Activated T-helper 1 cell treated with anti-CD3 and anti-CD28 coated beads, Interleukin-12 subunit alpha, Interleukin-12 subunit beta, Interleukin-2, Interleukin-4 antibody, amounts not matched to agents 30 ng/mL and 10 ng/mL and 1 ng/mL, durations not matched to agents 14 hours and 24 hours and 36 hours (primary cell): ENCODE measurements at regions of chr14 and their contacts with region 1.

Region 1: DNA sequence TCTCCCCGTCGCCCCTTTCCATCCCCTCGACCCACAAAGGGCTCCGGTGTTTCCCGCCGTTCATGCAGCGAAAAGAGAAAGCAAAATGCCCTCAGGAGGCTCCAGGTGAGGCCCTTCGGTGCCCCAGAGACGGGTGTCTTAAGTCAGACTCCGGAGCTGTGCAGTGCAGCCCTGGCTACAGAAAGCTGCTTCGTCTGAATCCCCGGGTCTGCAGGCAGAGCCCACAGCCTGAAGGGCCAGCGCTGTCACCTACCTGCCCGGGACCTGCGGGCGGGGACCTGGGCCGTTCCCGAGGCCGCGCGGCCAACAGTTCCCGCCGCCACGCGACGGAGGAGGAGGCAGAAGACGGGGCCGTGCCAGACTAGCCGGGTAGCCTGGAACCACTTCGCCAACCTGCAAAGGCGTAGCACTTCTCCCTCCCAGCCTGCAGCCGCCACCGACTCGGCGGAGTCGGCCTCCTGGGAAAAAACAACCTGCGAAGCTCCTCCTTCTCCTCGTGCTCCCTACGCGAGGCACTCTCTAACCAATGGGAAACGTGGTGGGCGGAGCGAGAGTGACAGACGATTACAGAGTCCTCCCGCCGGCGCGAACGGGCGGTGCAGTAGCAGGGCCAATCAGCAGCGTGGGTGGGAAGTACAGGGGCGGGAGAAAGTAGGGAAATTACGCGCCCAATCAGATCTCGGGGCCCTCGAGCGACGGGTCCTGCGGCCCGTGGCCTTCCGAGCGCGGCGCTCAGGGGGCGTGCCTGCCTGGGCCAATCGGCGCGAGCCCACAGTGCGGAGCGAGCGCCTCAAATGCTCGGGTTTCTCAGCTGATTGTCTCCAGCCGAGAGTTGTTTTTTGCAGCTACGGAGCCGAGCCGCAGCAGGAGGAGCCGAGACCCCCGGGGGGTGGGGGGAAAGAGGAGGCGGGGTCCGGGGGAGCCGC is at the starts of genes GPR137C and TXNDC16:
- DNase-seq: peak; percentile 99
- H3K4me3 Mint-ChIP-seq: peak within 1 kb of the TSS; percentile 92
- H3K27ac Mint-ChIP-seq: peak within 1 kb of the TSS; percentile 91
- H3K4me1 Mint-ChIP-seq: peaks cover 40% of the 10 kb centered on the region
- H3K27me3 Mint-ChIP-seq: peaks cover 25% of the 10 kb centered on the region
- total RNA-seq, gene GPR137C: 0.10 and 0.34 TPM in 2 replicates
- total RNA-seq, gene TXNDC16: 4.0 and 4.8 TPM in 2 replicates

Region 2: GRCh38 chr14:51651388-51652167 is 900.7 kb before region 1 on chr14 and contains the start of gene FRMD6:
- intact Hi-C with region 1: loop called (anchors 2 kb)
- DNase-seq: peak; percentile 74
- H3K4me3 Mint-ChIP-seq: peak within 1 kb of the TSS; percentile 81
- H3K27ac Mint-ChIP-seq: peak within 1 kb of the TSS; percentile 74
- H3K4me1 Mint-ChIP-seq: peaks cover 18% of the 10 kb centered on the region
- H3K27me3 Mint-ChIP-seq: peaks cover 7% of the 10 kb centered on the region
- total RNA-seq, gene FRMD6: 5.9 and 6.1 TPM in 2 replicates

Region 3: GRCh38 chr14:51996148-51996746 is 556.1 kb before region 1 on chr14:
- intact Hi-C with region 1: loop called (anchors 2 kb)
- DNase-seq: no peak
- H3K4me3 Mint-ChIP-seq: no peak overlapping the region
- H3K27ac Mint-ChIP-seq: no peak overlapping the region
- H3K4me1 Mint-ChIP-seq: peaks cover 35% of the 10 kb centered on the region
- H3K27me3 Mint-ChIP-seq: no peaks in the 10 kb centered on the region

Region 4: GRCh38 chr14:52272375-52272774 is 280.0 kb before region 1 on chr14:
- intact Hi-C with region 1: no loop called
- DNase-seq: no peak
- H3K4me3 Mint-ChIP-seq: no peak overlapping the region
- H3K27ac Mint-ChIP-seq: no peak overlapping the region
- H3K4me1 Mint-ChIP-seq: peaks cover 21% of the 10 kb centered on the region
- H3K27me3 Mint-ChIP-seq: peaks cover 57% of the 10 kb centered on the region

Region 5: DNA sequence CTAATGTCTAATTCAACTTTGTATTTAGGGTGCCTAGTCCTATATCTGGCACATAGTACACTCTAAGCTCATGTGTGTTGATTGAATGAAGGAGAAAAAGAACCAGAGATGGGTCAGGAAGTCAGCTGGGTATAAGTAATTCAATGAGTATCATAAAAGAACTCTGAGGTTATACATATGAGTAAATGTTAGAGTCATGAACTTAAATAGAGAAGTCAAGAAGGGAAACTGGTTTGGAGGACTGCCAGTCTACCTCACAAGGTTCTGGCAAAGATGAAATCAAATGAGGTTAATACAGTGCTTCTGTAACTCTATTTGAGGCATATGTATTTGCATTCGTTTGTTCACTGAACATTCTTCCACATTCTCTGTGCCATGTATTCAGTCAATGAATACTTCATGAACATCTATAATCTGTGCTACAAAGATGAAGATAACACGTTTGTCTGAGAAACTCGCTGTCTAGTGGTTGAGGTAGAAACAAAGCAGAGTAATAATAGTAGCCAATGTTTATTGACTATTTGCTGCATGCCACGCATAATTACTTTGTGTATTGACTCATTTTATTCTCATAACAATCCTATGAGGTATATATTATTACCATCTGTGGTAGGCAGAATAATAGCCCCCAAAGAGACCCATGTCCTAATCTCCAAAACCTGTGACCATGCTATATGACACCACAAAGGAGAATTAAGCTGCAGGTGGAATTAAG is 149.4 kb before region 1 on chr14:
- intact Hi-C with region 1: loop called (anchors 5 kb)
- DNase-seq: no peak
- H3K4me3 Mint-ChIP-seq: no peak overlapping the region
- H3K27ac Mint-ChIP-seq: peak overlapping the region; percentile 54
- H3K4me1 Mint-ChIP-seq: peaks cover 73% of the 10 kb centered on the region
- H3K27me3 Mint-ChIP-seq: no peaks in the 10 kb centered on the region

Region 6: GRCh38 chr14:52640137-52640536 is 87.8 kb after region 1 on chr14:
- intact Hi-C with region 1: loop called (anchors 5 kb)
- DNase-seq: no peak
- H3K4me3 Mint-ChIP-seq: no peak overlapping the region
- H3K27ac Mint-ChIP-seq: peak overlapping the region; percentile 41
- H3K4me1 Mint-ChIP-seq: peaks cover 14% of the 10 kb centered on the region
- H3K27me3 Mint-ChIP-seq: peaks cover 6% of the 10 kb centered on the region

Region 7: DNA sequence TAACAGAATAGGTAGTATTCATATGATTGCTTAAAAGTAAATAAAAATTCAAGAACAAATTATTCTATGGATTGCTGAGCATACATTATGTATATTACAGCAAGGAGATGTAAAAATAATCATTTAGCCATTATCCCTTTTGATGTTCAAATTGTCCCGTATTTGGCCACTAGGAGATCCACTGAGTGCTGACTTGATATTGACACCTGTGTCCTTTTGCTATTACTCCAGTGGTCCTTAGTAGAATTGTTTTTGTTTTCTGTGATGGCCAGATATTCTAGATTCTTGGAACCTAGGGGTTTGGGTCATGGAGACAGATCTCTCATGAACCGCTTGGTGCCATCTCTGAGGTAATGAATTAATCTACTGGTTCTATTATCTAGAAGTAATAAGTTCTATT is 126.3 kb after region 1 on chr14:
- intact Hi-C with region 1: no loop called
- DNase-seq: no peak
- H3K4me3 Mint-ChIP-seq: no peak overlapping the region
- H3K27ac Mint-ChIP-seq: no peak overlapping the region
- H3K4me1 Mint-ChIP-seq: peaks cover 16% of the 10 kb centered on the region
- H3K27me3 Mint-ChIP-seq: no peaks in the 10 kb centered on the region

Region 8: DNA sequence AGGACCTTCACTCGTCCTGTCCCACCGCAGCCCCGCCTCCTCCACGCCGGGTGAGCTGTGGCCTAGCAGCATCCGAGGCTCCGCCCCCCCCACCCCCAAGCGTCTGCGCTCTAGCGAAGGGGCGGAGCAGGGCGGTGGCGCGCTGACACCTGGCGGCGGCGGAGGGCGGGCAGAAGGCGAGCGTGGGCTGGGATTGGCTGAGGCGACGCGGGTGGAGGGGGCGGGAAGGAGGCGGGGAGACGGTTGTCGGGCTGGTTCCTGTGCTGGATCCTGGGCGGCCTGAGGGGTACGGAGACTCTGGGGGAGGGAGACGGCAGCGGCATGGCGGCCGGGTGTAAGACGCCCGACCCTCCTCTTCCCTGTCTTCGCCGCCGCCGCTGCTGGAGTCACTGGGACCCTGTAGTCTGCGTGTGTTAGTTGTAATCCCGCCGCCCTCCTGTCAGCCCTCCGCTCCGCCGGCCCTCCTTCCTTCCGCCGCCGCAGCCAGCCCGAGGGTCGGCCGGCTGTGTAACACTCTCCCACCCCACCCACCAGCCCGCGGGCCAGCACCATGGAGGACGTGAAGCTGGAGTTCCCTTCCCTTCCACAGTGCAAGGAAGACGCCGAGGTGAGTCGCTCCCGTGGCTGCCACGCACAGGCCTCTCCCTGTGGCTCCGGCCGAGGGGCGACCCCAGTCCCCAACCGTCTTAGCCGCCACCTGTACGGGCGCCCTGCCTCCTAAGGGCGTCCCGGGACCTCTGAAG is 177.8 kb after region 1 on chr14 and contains the start of gene STYX:
- intact Hi-C with region 1: loop called (anchors 1 kb)
- DNase-seq: peak; percentile 96
- H3K4me3 Mint-ChIP-seq: peak within 1 kb of the TSS; percentile 91
- H3K27ac Mint-ChIP-seq: peak within 1 kb of the TSS; percentile 76
- H3K4me1 Mint-ChIP-seq: peaks cover 37% of the 10 kb centered on the region
- H3K27me3 Mint-ChIP-seq: no peaks in the 10 kb centered on the region
- total RNA-seq, gene STYX: 18.7 and 21.3 TPM in 2 replicates

Region 9: DNA sequence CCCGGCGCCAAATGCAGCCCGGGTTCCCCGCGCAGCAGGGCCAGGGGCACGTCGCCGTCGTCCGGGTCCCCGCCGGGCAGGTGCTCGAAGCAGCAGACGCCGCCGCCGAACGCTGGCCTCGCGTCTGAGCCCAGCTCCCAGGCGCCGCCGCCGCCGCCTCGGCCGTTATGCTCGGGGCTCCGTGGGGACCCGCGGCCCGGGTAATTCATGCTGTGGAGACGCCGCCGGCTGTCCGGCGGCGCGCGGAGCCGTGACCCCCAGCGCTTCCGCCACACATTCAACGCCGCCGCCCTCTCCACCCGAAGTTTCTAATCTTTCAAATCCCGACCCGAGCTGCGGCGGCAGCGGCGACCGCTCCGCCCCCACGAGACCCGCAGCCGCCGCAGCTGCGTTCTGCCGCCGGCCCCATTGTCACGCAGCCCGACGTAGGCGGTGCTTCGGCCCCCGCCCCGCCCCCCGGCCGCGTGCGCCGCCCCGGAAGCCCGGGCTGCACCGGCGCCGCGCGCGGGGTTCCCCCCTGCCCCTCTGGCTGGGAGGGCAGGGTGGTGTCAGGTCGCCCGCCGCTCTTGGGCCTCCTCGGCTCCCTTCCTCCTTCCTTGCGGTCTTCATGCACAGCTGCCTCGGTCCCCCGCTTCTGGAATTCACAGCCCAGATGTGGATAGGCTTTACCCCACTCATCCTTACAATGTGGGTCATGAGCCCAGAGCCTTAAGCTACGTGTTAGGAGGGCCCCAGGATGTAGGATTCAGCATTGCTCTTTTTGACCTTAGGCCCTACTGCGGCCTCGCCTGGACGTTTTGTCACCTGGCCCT is 600.8 kb after region 1 on chr14 and contains the start of gene DDHD1:
- intact Hi-C with region 1: loop called (anchors 1 kb)
- DNase-seq: peak; percentile 83
- H3K4me3 Mint-ChIP-seq: peak within 1 kb of the TSS; percentile 100
- H3K27ac Mint-ChIP-seq: peak within 1 kb of the TSS; percentile 99
- H3K4me1 Mint-ChIP-seq: peaks cover 53% of the 10 kb centered on the region
- H3K27me3 Mint-ChIP-seq: peaks cover 2% of the 10 kb centered on the region
- total RNA-seq, gene DDHD1: 85.5 and 93.1 TPM in 2 replicates